SK-N-SH (cell line): ENCODE measurements at regions of chr3 and their contacts with region 1.

Region 1: DNA sequence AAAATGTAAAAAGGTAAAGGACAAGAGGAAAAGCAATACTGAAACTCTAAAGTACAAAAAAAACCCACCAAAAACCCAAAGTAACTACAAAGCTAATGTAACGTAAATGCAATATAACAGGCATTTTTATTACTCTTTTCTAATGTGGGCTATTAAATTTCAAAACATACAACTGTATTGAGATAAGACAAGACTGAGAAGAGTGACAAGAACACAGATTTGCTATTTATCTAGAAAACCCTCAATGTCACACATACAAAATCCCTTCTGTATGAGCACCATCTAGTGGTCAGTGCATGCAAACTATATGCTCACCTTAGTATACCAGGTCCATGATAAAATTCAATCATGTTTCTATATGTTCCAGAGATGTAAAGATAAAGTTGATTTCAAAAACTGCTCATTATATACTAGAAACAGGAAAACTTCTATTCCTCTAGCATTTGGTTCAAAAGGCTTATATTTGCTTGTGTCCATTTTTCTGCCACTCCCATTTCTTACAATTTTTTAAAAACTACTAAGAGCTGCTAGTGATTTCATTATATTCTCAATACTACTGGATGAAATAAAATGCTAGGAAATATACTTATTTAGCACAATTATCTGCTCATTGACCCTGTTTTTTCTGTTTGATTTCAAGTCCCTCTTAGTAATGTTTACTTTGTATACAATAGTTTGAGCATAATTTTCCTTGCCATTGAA is 111.4 kb downstream of the DLG1 start:
- DNase-seq: peak; percentile 55
- H3K4me3 ChIP-seq: no peak overlapping the region; a peak in 1 of 4 replicates
- H3K27ac ChIP-seq: peak overlapping the region in 1 of 2 experiments; percentile 80; a peak in 2 of 4 replicates
- H3K4me1 ChIP-seq: peaks cover 16 to 22% of the 10 kb centered on the region in 2 experiments; a peak in 3 of 4 replicates
- H3K27me3 ChIP-seq: no peaks in the 10 kb centered on the region
- CTCF ChIP-seq: peak; percentile 95
- EP300 ChIP-seq: no peak
- RAD21 ChIP-seq: peak; percentile 94

Region 2: DNA sequence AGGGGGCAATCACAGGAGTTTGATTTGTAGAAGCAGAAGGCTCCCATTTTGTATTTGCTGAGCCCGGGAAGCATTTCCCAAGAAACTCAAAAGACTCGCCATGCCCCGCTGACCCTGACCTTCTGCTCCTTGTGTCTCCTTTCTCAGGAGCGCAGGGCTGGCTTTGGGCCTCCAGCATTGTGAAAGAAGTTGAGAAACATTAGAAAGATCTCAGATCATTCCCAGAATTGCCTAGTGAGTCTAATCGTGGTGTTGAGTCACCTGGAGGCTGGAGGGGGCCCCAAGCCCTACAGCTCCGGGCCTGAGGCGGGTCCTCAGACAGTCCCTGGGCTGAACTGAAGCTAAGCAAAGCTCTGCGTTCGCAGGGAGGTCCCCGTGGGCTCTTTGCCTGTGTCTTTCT is 207.5 kb before region 1 on chr3:
- CTCF ChIA-PET with region 1: interaction called, 19 read pairs
- POLR2A ChIA-PET with region 1: no interaction called
- DNase-seq: no peak
- H3K4me3 ChIP-seq: no peak overlapping the region
- H3K27ac ChIP-seq: no peak overlapping the region
- H3K4me1 ChIP-seq: peaks cover 0 to 2% of the 10 kb centered on the region in 2 experiments; a peak in 1 of 4 replicates
- H3K27me3 ChIP-seq: no peaks in the 10 kb centered on the region
- CTCF ChIP-seq: no peak
- EP300 ChIP-seq: no peak
- RAD21 ChIP-seq: no peak

Region 3: DNA sequence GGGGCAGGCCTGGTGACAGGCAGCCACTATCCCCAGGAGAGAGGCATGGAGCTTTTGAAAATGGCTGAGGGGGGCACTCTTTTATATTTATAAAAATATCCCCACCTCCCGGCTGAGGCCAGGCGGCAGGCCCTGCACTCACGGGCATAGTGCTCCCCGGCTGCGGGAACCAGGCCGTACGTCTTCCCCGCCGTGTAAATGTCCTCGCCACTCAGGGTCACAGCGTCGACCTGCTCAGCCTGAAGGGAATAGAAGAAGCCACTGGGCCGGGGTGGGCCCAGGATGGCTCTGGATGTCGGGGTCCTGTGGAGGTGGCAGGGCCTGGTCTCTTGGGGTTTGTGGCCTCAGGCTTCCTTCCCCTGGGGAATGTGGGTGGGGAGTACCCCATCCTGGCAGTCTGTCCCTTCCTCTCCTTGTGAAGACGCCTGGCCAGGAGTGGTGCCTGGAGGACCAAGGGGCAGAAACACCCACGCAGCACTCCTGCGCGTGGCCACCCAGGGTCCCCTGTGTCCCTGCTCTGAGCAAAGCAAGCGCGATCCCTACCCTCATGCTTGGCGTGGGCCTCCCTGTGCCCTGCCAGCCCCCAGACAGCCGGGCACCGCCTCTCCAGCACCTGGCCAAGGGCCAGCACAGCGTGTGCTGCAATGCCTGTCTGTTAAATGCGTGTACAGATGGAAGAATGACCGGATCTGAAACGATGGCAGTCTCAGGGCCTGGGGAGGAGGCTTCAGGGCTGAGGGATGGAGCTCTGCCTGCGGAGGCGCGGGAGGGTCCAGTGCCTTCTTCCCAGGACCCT is 176.3 kb before region 1 on chr3:
- CTCF ChIA-PET with region 1: interaction called, 94 read pairs
- POLR2A ChIA-PET with region 1: no interaction called
- DNase-seq: peak; percentile 86
- H3K4me3 ChIP-seq: no peak overlapping the region
- H3K27ac ChIP-seq: no peak overlapping the region; a peak in 1 of 4 replicates
- H3K4me1 ChIP-seq: peaks cover 0 to 14% of the 10 kb centered on the region in 2 experiments; a peak in 1 of 4 replicates
- H3K27me3 ChIP-seq: no peaks in the 10 kb centered on the region
- CTCF ChIP-seq: no peak
- EP300 ChIP-seq: no peak
- RAD21 ChIP-seq: no peak

Region 4: DNA sequence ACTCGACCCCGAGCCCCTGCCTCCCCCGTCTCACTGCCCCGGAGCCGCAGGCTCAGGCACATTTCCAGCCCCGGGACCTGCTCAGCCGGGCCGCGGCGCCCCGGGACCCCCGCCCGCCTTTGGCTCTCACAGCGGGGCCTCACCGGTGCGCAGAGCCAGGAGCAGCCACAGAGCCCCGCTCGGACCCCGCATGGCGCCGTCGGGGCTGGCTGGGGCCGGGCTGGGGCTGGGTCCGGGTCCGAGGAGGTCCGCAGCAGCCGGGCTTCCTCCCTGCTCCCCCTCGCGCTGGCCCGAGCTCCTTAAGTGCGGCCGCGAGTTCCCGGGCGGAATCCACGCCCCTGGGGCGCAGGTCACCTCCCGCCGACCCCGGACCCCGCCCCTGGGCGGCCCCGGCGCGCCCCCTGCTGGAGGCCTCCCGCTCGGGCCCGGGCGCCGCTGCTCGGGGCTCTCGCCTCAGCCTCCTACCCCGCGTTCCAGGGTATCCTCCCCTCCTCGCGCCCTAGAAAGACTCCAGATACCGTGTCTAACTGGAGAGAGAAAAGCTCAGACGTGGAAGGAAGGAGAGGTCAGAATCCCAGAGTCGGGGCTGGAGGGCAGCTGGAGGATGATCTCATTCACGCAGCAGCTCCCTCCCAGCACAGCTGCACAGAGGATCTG is 157.4 kb before region 1 on chr3 and contains the start of gene MELTF:
- CTCF ChIA-PET with region 1: interaction called, 57 read pairs
- POLR2A ChIA-PET with region 1: interaction called, 4 read pairs
- DNase-seq: peak; percentile 99
- H3K4me3 ChIP-seq: peak within 1 kb of the TSS; percentile 63 to 74
- H3K27ac ChIP-seq: peak within 1 kb of the TSS in 1 of 2 experiments; percentile 93; a peak in 3 of 4 replicates
- H3K4me1 ChIP-seq: peaks cover 14 to 25% of the 10 kb centered on the region in 2 experiments; a peak in 3 of 4 replicates
- H3K27me3 ChIP-seq: no peaks in the 10 kb centered on the region
- CTCF ChIP-seq: peak; percentile 83
- EP300 ChIP-seq: no peak
- RAD21 ChIP-seq: peak; percentile 50
- polyA plus RNA-seq, gene MELTF: 27.2 and 32.4 TPM in 2 replicates

Region 5: GRCh38 chr3:197197334-197197733 is 10.3 kb after region 1 on chr3:
- CTCF ChIA-PET with region 1: interaction called, 19 read pairs
- POLR2A ChIA-PET with region 1: no interaction called
- DNase-seq: no peak
- H3K4me3 ChIP-seq: no peak overlapping the region
- H3K27ac ChIP-seq: no peak overlapping the region
- H3K4me1 ChIP-seq: no peaks in the 10 kb centered on the region
- H3K27me3 ChIP-seq: no peaks in the 10 kb centered on the region
- CTCF ChIP-seq: no peak
- EP300 ChIP-seq: no peak
- RAD21 ChIP-seq: no peak

Region 6: DNA sequence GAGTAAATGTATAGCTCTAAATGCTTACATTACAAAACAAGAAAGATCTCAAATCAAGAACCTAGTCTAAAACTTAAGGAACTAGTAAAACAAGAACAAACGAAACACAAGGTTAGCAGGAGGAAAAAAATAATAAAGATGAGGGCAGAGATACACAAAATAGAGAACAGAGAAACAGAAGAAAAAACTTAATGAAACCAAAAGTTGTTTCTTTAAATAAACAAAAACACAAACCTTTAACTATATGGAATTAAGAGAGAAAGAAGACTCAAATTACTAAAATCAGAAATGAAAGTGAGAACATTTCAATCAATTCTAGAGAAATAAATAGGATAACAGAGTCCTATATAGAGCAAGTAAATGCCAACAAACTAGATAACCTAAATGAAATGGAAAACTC is 51.8 kb after region 1 on chr3:
- CTCF ChIA-PET with region 1: no interaction called
- POLR2A ChIA-PET with region 1: no interaction called
- DNase-seq: no peak
- H3K4me3 ChIP-seq: no peak overlapping the region
- H3K27ac ChIP-seq: no peak overlapping the region
- H3K4me1 ChIP-seq: no peaks in the 10 kb centered on the region
- H3K27me3 ChIP-seq: no peaks in the 10 kb centered on the region
- CTCF ChIP-seq: no peak
- EP300 ChIP-seq: no peak
- RAD21 ChIP-seq: no peak

Region 7: DNA sequence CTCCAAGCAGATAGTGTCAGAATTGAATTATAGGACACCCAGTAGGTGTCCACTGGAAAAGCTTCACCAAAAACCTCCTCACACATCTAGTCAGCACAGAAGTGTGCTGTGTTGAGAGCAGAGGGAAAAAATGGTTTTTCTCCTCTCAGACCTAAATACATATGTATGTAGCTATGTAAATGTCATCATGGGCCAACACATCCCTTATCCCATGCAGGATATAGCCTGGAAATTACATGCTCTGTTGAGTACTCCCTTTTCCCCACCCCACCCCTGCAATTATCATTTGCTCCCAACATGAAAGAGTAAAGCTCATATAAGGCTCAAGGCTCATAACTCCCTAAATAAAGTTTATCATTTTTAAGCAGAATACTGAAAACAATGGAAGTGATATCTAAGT is 75.7 kb after region 1 on chr3:
- CTCF ChIA-PET with region 1: no interaction called
- POLR2A ChIA-PET with region 1: no interaction called
- DNase-seq: no peak
- H3K4me3 ChIP-seq: no peak overlapping the region
- H3K27ac ChIP-seq: no peak overlapping the region
- H3K4me1 ChIP-seq: peaks cover 0 to 2% of the 10 kb centered on the region in 2 experiments; a peak in 2 of 4 replicates
- H3K27me3 ChIP-seq: no peaks in the 10 kb centered on the region
- CTCF ChIP-seq: no peak
- EP300 ChIP-seq: no peak
- RAD21 ChIP-seq: no peak

Region 8: GRCh38 chr3:197456261-197457091 is 269.4 kb after region 1 on chr3:
- CTCF ChIA-PET with region 1: no interaction called
- POLR2A ChIA-PET with region 1: no interaction called
- DNase-seq: no peak
- H3K4me3 ChIP-seq: no peak overlapping the region
- H3K27ac ChIP-seq: no peak overlapping the region
- H3K4me1 ChIP-seq: peaks cover 0 to 8% of the 10 kb centered on the region in 2 experiments; a peak in 1 of 4 replicates
- H3K27me3 ChIP-seq: no peaks in the 10 kb centered on the region
- CTCF ChIP-seq: no peak
- EP300 ChIP-seq: no peak
- RAD21 ChIP-seq: no peak